ENCODE measurements at regions of chr15 and their contacts with region 1.

Region 1: DNA sequence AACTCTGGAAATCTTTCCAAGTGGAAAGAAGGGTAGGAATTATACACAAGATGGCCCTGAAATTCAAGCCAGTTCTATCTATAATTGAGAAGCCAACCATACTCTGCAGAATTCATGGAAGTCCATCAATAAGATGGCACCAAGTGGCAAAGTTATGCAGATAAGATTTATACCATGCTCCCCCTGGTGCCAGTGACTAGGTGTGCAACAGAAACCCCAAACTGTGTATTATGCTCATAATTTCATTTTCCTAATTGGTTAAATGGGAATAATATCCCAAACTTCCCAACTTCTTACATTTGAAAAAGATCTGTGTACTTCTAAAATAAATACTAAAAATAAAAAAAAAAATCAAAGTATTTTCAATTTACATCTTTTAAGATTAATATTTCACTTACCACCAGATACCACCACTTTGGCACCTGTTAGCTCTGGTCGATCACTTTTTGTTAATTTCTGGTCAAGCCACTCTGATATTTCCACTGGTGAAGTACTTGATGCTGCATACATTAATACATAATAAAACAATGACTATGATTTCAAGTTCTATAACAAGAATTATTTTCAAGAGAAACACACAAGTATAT is 25.9 kb downstream of the ETFA start:
- DNase-seq: no peak
- ATAC-seq: peak; percentile 83
- H3K4me3 ChIP-seq: no peak overlapping the region
- H3K27ac ChIP-seq: no peak overlapping the region
- H3K4me1 ChIP-seq: no peaks in the 10 kb centered on the region
- H3K27me3 ChIP-seq: no peaks in the 10 kb centered on the region
- CTCF ChIP-seq: peak; percentile 62 to 64 (median 63)
- POLR2A ChIP-seq: no peak
- RAD21 ChIP-seq: peak; percentile 53; the same call in 1 of the 2 replicates

Region 2: GRCh38 chr15:76190834-76191538 is 94.3 kb before region 1 on chr15:
- CTCF ChIA-PET with region 1: interaction called, 5 read pairs
- POLR2A ChIA-PET with region 1: no interaction called
- RAD21 ChIA-PET with region 1: no interaction called
- intact Hi-C with region 1: loop called (anchors 1 kb)
- DNase-seq: peak; percentile 46
- ATAC-seq: peak; percentile 94
- H3K4me3 ChIP-seq: no peak overlapping the region
- H3K27ac ChIP-seq: no peak overlapping the region
- H3K4me1 ChIP-seq: peaks cover 3 to 17% of the 10 kb centered on the region in 2 experiments
- H3K27me3 ChIP-seq: no peaks in the 10 kb centered on the region
- CTCF ChIP-seq: peak in 2 of 3 experiments; percentile 91; a peak in 4 of 6 replicates
- POLR2A ChIP-seq: no peak
- RAD21 ChIP-seq: no peak